ENCODE measurements at regions of chr16 and their contacts with region 1.

Region 1: DNA sequence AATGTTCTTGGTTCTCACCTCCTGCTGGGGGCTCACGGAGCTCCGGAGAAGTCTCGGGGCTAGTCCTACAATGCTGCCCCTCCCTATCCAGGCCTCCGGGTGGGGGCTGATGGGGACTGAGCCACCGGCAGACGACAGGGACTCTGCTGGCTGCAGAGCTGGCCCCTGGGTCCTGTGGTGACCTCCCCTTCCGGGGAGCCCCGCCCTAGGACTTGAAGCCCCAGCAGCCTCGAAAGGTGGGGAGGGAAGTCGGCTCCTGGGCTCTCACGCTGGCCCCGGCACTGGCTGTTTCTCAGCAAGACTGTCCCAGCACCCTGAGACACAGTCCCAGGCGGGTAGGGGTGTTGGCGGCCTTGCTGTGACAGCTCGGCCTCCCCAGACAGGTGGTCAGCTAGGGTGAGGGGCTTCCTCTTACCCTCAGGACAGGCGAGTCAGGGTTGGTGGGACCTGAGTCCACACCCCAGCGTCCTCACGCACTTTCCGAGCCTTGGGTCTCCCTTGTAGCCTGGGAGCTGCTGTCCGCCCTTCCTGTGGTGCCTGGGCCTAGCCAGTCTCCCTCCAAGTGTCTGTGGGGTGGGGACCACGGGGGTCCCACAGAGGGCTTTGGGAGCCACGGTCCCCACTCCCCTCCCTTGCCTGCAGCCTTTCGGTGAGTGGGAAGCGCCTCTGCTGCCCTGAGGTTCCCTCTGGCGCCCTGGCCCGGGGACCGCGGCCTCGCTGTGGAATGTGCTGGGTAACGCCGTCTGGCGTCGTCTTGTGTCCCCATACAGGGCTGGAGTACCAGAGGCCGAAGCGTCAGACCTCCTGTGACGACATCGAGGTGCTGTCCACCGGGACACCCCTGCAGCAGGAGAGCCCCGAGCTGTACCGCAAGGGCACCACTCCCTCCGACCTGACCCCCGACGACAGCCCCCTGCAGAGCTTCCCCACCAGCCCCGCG is 76.6 kb downstream of the KLHDC4 start:
- DNase-seq: no peak
- H3K4me3 Mint-ChIP-seq: no peak overlapping the region
- H3K27ac Mint-ChIP-seq: no peak overlapping the region
- H3K4me1 Mint-ChIP-seq: no peaks in the 10 kb centered on the region
- H3K27me3 Mint-ChIP-seq: peaks cover 37% of the 10 kb centered on the region
- CTCF ChIP-seq: no peak

Region 2: DNA sequence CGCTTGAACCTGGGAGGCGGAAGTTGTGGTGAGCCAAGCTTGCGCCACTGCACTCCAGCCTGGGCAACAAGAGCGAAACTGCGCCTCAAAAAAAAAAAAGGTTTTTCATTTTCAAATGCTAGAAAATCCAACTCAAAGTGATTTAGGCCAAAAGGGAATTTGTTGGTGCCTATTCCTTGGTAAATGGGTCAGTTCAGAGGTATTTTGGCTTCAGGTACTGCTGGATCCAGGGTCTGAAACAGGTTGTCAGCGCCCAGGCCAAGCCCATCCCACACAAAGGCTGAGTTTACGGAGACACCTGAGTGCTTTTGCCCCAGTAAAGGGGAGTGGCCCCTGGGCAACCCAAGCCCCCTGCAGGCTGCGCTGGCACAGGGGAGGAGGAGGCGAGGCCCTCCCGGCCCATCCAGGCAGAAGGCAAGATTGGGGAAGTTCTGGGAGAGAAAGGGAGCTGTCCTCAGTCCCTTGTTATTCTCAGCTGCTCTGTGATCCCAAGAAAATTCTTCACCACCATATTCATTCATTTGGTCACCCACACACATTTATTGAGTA is 95.4 kb before region 1 on chr16:
- CTCF ChIA-PET with region 1: no interaction called
- intact Hi-C with region 1: no loop called
- DNase-seq: no peak
- H3K4me3 Mint-ChIP-seq: no peak overlapping the region
- H3K27ac Mint-ChIP-seq: no peak overlapping the region
- H3K4me1 Mint-ChIP-seq: no peaks in the 10 kb centered on the region
- H3K27me3 Mint-ChIP-seq: peaks cover 44% of the 10 kb centered on the region
- CTCF ChIP-seq: no peak

Region 3: DNA sequence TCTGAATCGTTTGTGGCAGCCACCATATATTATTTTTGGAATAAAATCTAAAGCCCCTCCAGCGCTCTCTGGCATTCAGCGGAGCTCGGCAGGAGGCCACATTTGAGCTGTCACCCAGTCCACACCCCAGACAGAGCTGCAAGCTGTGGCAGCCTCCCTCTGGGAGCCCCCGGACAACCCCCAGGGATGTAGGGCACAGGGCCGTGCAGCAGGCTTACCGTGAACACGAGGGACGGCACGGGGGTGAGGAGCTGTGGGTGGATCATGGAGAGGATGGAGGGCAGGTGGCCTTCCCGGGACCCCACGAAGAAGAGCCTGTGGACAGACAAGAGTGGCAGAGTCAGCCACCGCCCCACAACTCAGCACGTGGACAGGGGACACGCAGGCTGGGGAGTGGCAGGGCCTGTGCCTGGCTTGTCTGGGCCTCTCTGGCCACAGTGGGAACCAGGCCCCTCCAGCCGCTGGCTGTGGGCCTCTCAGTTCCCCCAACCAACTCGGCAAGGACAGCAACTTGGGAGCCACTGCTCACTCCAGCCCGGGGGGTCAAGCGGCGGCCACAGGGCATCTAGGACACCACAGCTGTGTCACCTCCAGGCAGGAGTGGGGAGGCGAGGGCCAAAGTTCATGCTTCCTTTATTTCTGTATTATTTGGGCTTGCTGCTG is 148.6 kb after region 1 on chr16:
- CTCF ChIA-PET with region 1: interaction called, 10 read pairs
- intact Hi-C with region 1: no loop called
- DNase-seq: no peak
- H3K4me3 Mint-ChIP-seq: no peak overlapping the region
- H3K27ac Mint-ChIP-seq: no peak overlapping the region
- H3K4me1 Mint-ChIP-seq: no peaks in the 10 kb centered on the region
- H3K27me3 Mint-ChIP-seq: no peaks in the 10 kb centered on the region
- CTCF ChIP-seq: no peak

Region 4: DNA sequence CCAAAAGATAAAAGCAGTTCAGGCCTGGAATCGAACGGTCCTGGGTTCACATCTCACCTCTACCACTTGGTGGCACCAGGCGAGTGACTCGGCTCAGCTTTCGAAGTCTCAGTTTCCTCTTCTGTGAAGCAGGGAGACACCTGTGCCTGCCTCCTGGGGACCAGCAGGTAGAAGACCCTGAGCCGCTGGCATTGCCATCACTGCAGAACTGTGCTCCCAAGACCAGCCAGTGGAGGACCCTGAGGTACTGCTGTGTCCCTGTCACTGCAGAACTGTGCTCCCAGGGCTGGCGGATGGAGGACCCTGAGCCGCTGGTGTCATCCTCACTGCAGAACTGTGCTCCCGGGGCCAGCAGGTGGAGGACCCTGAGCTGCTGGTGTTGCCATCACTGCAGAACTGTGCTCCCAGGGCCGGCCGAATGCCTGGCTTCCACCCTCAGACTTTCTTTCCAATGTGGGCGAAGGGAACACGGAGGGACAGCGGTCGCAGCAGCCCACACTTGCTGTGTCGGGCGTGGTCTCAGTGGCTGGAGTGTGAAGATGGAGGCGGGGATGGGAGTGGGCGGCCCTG is 188.9 kb after region 1 on chr16:
- CTCF ChIA-PET with region 1: no interaction called
- intact Hi-C with region 1: no loop called
- DNase-seq: peak; percentile 34
- H3K4me3 Mint-ChIP-seq: no peak overlapping the region
- H3K27ac Mint-ChIP-seq: no peak overlapping the region
- H3K4me1 Mint-ChIP-seq: peaks cover 29% of the 10 kb centered on the region
- H3K27me3 Mint-ChIP-seq: peaks cover 25% of the 10 kb centered on the region
- CTCF ChIP-seq: peak; percentile 23